ENCODE measurements at regions of chr1 and their contacts with region 1.

Region 1: GRCh38 chr1:224736619-224737352 is 120.7 kb downstream of the CNIH3 start:
- DNase-seq: peak; percentile 93
- ATAC-seq: peak; percentile 61
- H3K4me3 ChIP-seq: no peak overlapping the region
- H3K27ac ChIP-seq: peak overlapping the region; percentile 49
- H3K4me1 ChIP-seq: peaks cover 77% of the 10 kb centered on the region
- H3K27me3 ChIP-seq: no peaks in the 10 kb centered on the region
- CTCF ChIP-seq: no peak
- EP300 ChIP-seq: peak; percentile 88 to 90; a peak in 3 of 4 replicates
- POLR2A ChIP-seq: no peak
- RAD21 ChIP-seq: no peak

Region 2: GRCh38 chr1:224644553-224645154 is 92.1 kb before region 1 on chr1:
- CTCF ChIA-PET with region 1: interaction called, 17 read pairs
- POLR2A ChIA-PET with region 1: no interaction called
- RAD21 ChIA-PET with region 1: interaction called, 5 read pairs
- SMC1A ChIA-PET with region 1: interaction called, 34 read pairs
- in situ Hi-C with region 1: no loop called
- intact Hi-C with region 1: loop called (anchors 2 kb)
- DNase-seq: peak; percentile 24
- ATAC-seq: peak; percentile 85
- H3K4me3 ChIP-seq: no peak overlapping the region
- H3K27ac ChIP-seq: no peak overlapping the region
- H3K4me1 ChIP-seq: no peaks in the 10 kb centered on the region
- H3K27me3 ChIP-seq: no peaks in the 10 kb centered on the region; a peak in 1 of 4 replicates
- CTCF ChIP-seq: peak; percentile 84 to 91 (median 90)
- EP300 ChIP-seq: no peak
- POLR2A ChIP-seq: no peak
- RAD21 ChIP-seq: peak; percentile 84

Region 3: GRCh38 chr1:224747578-224747977 is 10.8 kb after region 1 on chr1:
- CTCF ChIA-PET with region 1: interaction called, 28 read pairs
- POLR2A ChIA-PET with region 1: interaction called, 34 read pairs
- RAD21 ChIA-PET with region 1: interaction called, 174 read pairs
- SMC1A ChIA-PET with region 1: interaction called, 135 read pairs
- in situ Hi-C with region 1: no loop called
- intact Hi-C with region 1: no loop called
- DNase-seq: no peak
- ATAC-seq: peak; percentile 45
- H3K4me3 ChIP-seq: no peak overlapping the region
- H3K27ac ChIP-seq: no peak overlapping the region
- H3K4me1 ChIP-seq: peaks cover 53% of the 10 kb centered on the region
- H3K27me3 ChIP-seq: no peaks in the 10 kb centered on the region
- CTCF ChIP-seq: no peak
- EP300 ChIP-seq: no peak
- POLR2A ChIP-seq: no peak
- RAD21 ChIP-seq: no peak

Region 4: DNA sequence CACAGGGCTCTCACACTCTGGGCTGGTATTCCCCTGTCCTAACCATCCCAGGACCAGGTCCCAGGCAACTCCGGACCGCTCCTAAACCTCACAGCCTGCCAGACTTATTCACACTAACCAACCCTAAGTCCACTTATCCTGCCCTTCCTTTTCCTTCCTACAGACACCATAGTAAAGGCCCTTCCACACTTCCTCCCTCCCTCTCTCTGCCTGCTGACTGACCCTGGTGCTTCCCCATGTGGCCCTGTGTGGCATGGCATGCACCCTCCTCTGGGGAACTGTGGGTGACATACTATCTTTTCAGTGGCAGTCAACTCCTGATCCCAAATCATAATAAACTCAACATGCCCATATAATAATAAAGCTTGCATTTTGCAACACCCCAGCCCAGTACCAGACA is 37.6 kb after region 1 on chr1:
- CTCF ChIA-PET with region 1: interaction called, 7 read pairs
- POLR2A ChIA-PET with region 1: no interaction called
- RAD21 ChIA-PET with region 1: interaction called, 9 read pairs
- SMC1A ChIA-PET with region 1: interaction called, 15 read pairs
- in situ Hi-C with region 1: no loop called
- intact Hi-C with region 1: no loop called
- DNase-seq: no peak
- ATAC-seq: peak; percentile 91
- H3K4me3 ChIP-seq: no peak overlapping the region
- H3K27ac ChIP-seq: no peak overlapping the region
- H3K4me1 ChIP-seq: no peaks in the 10 kb centered on the region
- H3K27me3 ChIP-seq: no peaks in the 10 kb centered on the region
- CTCF ChIP-seq: peak in 2 of 3 experiments; percentile 42 to 59; a peak in 4 of 6 replicates
- EP300 ChIP-seq: no peak
- POLR2A ChIP-seq: no peak
- RAD21 ChIP-seq: peak; percentile 52

Region 5: GRCh38 chr1:225999227-225999911 is 1262.6 kb after region 1 on chr1 and contains the start of gene SDE2:
- CTCF ChIA-PET with region 1: no interaction called
- POLR2A ChIA-PET with region 1: no interaction called
- RAD21 ChIA-PET with region 1: no interaction called
- SMC1A ChIA-PET with region 1: no interaction called
- in situ Hi-C with region 1: no loop called
- intact Hi-C with region 1: loop called (anchors 10 kb)
- DNase-seq: peak; percentile 95
- ATAC-seq: peak; percentile 83
- H3K4me3 ChIP-seq: peak within 1 kb of the TSS; percentile 96
- H3K27ac ChIP-seq: peak within 1 kb of the TSS; percentile 97
- H3K4me1 ChIP-seq: peaks cover 39% of the 10 kb centered on the region
- H3K27me3 ChIP-seq: no peaks in the 10 kb centered on the region
- CTCF ChIP-seq: no peak
- EP300 ChIP-seq: no peak; a peak in 1 of 4 replicates
- POLR2A ChIP-seq: peak; percentile 100
- RAD21 ChIP-seq: no peak
- polyA plus RNA-seq, gene SDE2: 2.7 to 4.3 TPM

Measured in GM12878 (cell line).